ENCODE measurements at regions of chr3 and their contacts with region 1.

Region 1: GRCh38 chr3:187319699-187320302 is 28.3 kb upstream of the MASP1 start:
- DNase-seq: peak; percentile 90
- H3K4me3 Mint-ChIP-seq: no peak overlapping the region
- H3K27ac Mint-ChIP-seq: no peak overlapping the region
- H3K4me1 Mint-ChIP-seq: peaks cover 7% of the 10 kb centered on the region
- H3K27me3 Mint-ChIP-seq: peaks cover 22% of the 10 kb centered on the region

Region 2: GRCh38 chr3:187223799-187224198 is 96.0 kb before region 1 on chr3:
- intact Hi-C with region 1: loop called (anchors 1 kb)
- DNase-seq: no peak
- H3K4me3 Mint-ChIP-seq: no peak overlapping the region
- H3K27ac Mint-ChIP-seq: no peak overlapping the region
- H3K4me1 Mint-ChIP-seq: no peaks in the 10 kb centered on the region
- H3K27me3 Mint-ChIP-seq: peaks cover 11% of the 10 kb centered on the region

Region 3: GRCh38 chr3:187430576-187430975 is 110.8 kb after region 1 on chr3:
- intact Hi-C with region 1: loop called (anchors 5 kb)
- DNase-seq: peak; percentile 38
- H3K4me3 Mint-ChIP-seq: no peak overlapping the region
- H3K27ac Mint-ChIP-seq: no peak overlapping the region
- H3K4me1 Mint-ChIP-seq: no peaks in the 10 kb centered on the region
- H3K27me3 Mint-ChIP-seq: peaks cover 4% of the 10 kb centered on the region

Region 4: GRCh38 chr3:187616307-187616972 is 296.6 kb after region 1 on chr3:
- intact Hi-C with region 1: loop called (anchors 1 kb)
- DNase-seq: peak; percentile 84
- H3K4me3 Mint-ChIP-seq: no peak overlapping the region
- H3K27ac Mint-ChIP-seq: no peak overlapping the region
- H3K4me1 Mint-ChIP-seq: no peaks in the 10 kb centered on the region
- H3K27me3 Mint-ChIP-seq: peaks cover 16% of the 10 kb centered on the region

Region 5: DNA sequence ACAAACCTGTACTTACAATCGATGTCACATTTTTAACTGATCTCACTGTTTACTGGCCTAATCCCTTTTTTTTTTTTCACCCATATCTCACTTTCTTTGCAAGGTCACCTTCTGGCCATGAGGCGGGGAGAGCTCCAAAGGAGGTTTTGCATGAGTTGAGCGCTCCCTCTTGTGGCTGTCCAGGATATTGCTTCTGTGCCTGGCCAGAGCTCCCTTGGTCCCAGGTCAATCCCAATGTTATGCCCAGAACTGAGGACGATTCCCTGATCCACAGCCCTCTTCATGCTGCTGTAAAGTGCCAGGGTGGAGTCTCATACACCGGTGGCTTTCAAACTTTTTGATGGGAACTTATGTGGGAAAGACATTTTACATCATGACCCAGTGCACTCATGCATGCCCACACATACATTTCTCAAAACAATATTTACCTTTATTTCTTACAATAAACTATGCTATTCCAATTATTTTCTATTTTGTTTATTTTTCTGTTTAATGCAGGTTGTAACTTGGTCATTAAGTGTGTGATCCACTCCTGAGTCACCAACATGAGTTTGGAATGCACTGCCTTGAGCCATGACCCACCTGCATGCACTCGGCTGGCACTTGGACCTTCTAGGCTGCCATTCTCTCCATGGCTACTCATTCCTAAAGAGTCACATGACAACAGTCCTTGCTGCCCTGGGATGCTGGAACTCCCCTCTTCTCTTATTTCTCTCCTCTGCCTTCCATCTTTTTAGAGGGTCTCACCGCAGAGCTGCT is 360.0 kb after region 1 on chr3:
- intact Hi-C with region 1: loop called (anchors 1 kb)
- DNase-seq: peak; percentile 90
- H3K4me3 Mint-ChIP-seq: no peak overlapping the region
- H3K27ac Mint-ChIP-seq: no peak overlapping the region
- H3K4me1 Mint-ChIP-seq: peaks cover 7% of the 10 kb centered on the region
- H3K27me3 Mint-ChIP-seq: peaks cover 41% of the 10 kb centered on the region

Region 6: DNA sequence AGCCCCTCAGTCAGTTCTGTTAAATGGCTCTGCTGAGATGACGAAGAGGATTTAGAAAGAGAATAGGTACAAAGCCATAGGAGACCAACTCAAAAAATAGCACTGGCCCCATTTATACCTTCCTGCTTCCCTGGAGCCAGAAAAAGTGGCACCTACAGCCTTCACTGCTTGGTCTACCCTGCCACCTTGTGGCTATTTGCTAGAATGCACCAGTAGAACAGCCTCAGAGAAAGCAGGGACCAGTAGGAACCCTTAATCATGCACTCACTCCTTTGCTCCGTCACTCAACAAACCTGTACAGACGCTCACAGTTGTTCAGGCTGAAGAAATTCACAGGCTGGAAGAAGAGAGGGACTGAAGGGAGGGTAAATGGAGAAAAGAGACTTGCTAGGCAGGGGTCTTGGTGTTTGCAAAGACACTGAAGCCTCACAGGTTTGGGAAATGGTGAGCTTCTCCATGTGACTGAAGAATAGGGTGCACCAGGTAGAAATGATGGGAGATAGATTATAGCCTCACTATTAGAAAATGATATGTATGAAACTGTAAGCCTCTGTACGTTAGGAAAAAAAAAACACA is 394.7 kb after region 1 on chr3:
- intact Hi-C with region 1: loop called (anchors 1 kb)
- DNase-seq: peak; percentile 92
- H3K4me3 Mint-ChIP-seq: no peak overlapping the region
- H3K27ac Mint-ChIP-seq: no peak overlapping the region
- H3K4me1 Mint-ChIP-seq: peaks cover 9% of the 10 kb centered on the region
- H3K27me3 Mint-ChIP-seq: peaks cover 14% of the 10 kb centered on the region

Measured in activated CD4-positive, alpha-beta T cell treated with anti-CD3 and anti-CD28 coated beads, Interleukin-2, amount 10 ng/mL, durations not matched to agents 24 days and 14 days (primary cell).